ENCODE measurements at regions of chr19 and their contacts with region 1.

Region 1: DNA sequence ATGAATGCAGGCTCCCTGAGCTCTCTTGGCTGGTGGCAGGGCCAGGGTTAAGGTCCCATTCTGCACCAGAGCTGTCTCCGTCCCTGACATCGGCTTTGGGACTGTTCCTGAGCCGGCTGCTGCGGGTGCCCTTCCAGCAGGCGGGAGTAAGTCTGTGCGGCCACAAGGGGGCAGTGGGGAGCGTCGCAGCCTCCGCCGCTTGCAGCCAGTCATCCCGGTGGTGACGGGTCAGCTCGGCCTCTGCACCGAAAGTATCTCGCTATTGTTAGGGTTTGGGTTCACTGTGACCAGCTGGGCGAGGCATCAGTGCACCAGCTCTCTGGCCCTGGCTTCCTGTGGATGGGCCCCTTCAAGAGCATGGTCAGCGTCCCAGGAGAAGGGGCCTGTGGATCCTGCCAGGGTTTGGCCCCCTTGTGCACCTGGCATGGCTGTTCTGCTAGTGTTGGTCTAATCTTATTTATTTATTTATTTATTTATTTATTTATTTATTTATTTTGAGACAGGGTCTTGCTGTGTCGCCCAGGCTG is 15.1 kb downstream of the NDUFB7 start:
- DNase-seq: peak; percentile 78
- H3K4me3 ChIP-seq: no peak overlapping the region
- H3K27ac ChIP-seq: no peak overlapping the region
- H3K4me1 ChIP-seq: peaks cover 33% of the 10 kb centered on the region
- CTCF ChIP-seq: peak; percentile 95

Region 2: GRCh38 chr19:14505488-14506432 is 51.0 kb before region 1 on chr19:
- CTCF ChIA-PET with region 1: interaction called, 3 read pairs
- POLR2A ChIA-PET with region 1: no interaction called
- intact Hi-C with region 1: loop called (anchors 5 kb)
- DNase-seq: peak; percentile 73
- H3K4me3 ChIP-seq: no peak overlapping the region
- H3K27ac ChIP-seq: no peak overlapping the region
- H3K4me1 ChIP-seq: peaks cover 21% of the 10 kb centered on the region
- CTCF ChIP-seq: peak; percentile 90

Region 3: DNA sequence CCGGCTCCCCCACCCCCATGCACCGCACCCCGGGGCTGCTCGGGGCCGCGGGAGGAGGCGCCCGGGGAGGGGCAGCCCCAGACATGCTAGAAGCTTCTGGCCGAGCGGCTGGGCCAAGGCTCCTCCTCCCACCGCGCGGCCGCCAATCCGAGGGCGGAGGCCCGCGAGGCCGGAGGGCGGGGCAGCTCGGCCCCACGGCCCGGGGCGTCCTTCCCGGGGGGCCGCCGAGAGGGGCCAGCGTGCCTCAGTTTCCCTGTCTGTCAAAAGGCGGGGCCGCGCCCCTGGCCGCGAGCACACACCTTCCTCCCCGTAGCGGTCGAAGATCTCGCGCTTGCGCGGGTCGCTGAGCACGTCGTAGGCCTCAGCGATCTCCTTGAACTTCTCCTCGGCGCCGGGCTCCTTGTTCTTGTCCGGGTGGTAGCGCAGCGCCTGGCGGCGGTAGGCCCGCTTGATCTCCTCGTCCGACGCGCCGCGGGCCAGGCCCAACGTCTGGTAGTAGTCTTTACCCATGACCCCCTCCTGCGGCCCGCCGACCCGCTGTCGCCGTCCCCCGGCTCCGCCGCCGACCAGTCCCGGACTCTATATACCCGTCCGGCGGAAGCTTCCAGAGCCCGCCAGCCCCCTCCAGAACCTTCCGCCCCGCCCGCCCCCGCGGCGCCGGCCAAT is 38.8 kb before region 1 on chr19 and contains the start of gene DNAJB1:
- CTCF ChIA-PET with region 1: no interaction called
- POLR2A ChIA-PET with region 1: no interaction called
- intact Hi-C with region 1: loop called (anchors 5 kb)
- DNase-seq: peak; percentile 77
- H3K4me3 ChIP-seq: peak within 1 kb of the TSS; percentile 93
- H3K27ac ChIP-seq: peak within 1 kb of the TSS; percentile 76
- H3K4me1 ChIP-seq: peaks cover 56% of the 10 kb centered on the region
- CTCF ChIP-seq: no peak
- total RNA-seq, gene DNAJB1: 62.9 and 76.7 TPM in 2 replicates

Region 4: GRCh38 chr19:14603990-14604387 is 47.3 kb after region 1 on chr19:
- CTCF ChIA-PET with region 1: no interaction called
- POLR2A ChIA-PET with region 1: no interaction called
- intact Hi-C with region 1: no loop called
- DNase-seq: peak; percentile 94
- H3K4me3 ChIP-seq: peak overlapping the region; percentile 46
- H3K27ac ChIP-seq: peak overlapping the region; percentile 96
- H3K4me1 ChIP-seq: peaks cover 44% of the 10 kb centered on the region
- CTCF ChIP-seq: no peak